PC-3 (cell line): ENCODE measurements at regions of chr2 and their contacts with region 1.

Region 1: DNA sequence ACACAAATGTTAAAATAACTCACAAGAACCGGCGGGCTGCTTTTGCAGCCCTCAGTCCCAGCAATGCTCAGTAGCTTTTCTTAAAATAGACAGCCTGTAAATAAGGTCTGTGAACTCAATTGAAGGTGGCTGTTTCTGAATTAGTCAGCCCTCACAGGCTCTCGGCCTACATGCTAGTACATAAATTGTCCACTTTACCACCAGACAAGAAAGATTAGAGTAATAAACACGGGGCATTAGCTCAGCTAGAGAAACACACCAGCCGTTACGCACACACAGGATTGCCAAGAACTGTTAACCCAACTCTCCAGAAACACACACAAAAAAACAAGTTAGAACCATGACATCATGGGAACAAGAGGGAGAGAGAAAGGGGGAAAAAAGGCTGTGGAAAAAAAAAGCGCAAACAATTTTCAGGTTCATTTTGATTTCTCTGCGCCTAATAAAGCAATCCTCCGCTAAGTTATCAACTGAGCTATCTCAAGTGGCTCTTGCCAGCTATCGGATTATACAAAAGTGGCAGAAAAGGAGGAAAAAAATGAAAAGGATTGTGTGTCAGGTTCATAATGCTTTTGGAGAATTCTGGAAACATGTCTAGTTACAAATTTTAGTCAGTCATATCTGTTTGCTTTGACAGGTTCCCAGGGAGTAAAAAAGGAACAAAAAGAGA is 89.1 kb downstream of the ZEB2 start:
- DNase-seq: no peak
- ATAC-seq: no peak
- H3K4me3 ChIP-seq: no peak overlapping the region
- H3K27ac ChIP-seq: no peak overlapping the region
- H3K4me1 ChIP-seq: peaks cover 13% of the 10 kb centered on the region
- H3K27me3 ChIP-seq: no peaks in the 10 kb centered on the region
- CTCF ChIP-seq: no peak

Region 2: GRCh38 chr2:143936848-143937722 is 493.8 kb before region 1 on chr2:
- CTCF ChIA-PET with region 1: no interaction called
- POLR2A ChIA-PET with region 1: no interaction called
- intact Hi-C with region 1: no loop called
- DNase-seq: no peak
- ATAC-seq: peak; percentile 45
- H3K4me3 ChIP-seq: peak overlapping the region; percentile 59
- H3K27ac ChIP-seq: no peak overlapping the region
- H3K4me1 ChIP-seq: no peaks in the 10 kb centered on the region
- H3K27me3 ChIP-seq: no peaks in the 10 kb centered on the region
- CTCF ChIP-seq: no peak

Region 3: GRCh38 chr2:144645083-144645778 is 214.4 kb after region 1 on chr2:
- CTCF ChIA-PET with region 1: no interaction called
- POLR2A ChIA-PET with region 1: no interaction called
- intact Hi-C with region 1: loop called (anchors 10 kb)
- DNase-seq: no peak
- ATAC-seq: no peak
- H3K4me3 ChIP-seq: no peak overlapping the region
- H3K27ac ChIP-seq: no peak overlapping the region
- H3K4me1 ChIP-seq: peaks cover 15% of the 10 kb centered on the region
- H3K27me3 ChIP-seq: no peaks in the 10 kb centered on the region
- CTCF ChIP-seq: no peak